Activated T-helper 1 cell treated with anti-CD3 and anti-CD28 coated beads, Interleukin-12 subunit alpha, Interleukin-12 subunit beta, Interleukin-2, Interleukin-4 antibody, amounts not matched to agents 30 ng/mL and 10 ng/mL and 1 ng/mL, durations not matched to agents 14 hours and 24 hours and 36 hours (primary cell): ENCODE measurements at regions of chr1 and their contacts with region 1.

Region 1: GRCh38 chr1:45303582-45304310 is 22.9 kb upstream of the HPDL start:
- DNase-seq: peak; percentile 87
- H3K4me3 Mint-ChIP-seq: peak overlapping the region; percentile 92
- H3K27ac Mint-ChIP-seq: peak overlapping the region; percentile 93
- H3K4me1 Mint-ChIP-seq: peaks cover 50% of the 10 kb centered on the region
- H3K27me3 Mint-ChIP-seq: no peaks in the 10 kb centered on the region

Region 2: GRCh38 chr1:44354840-44355581 is 948.7 kb before region 1 on chr1 and contains the start of gene ERI3:
- intact Hi-C with region 1: loop called (anchors 10 kb)
- DNase-seq: peak; percentile 95
- H3K4me3 Mint-ChIP-seq: peak within 1 kb of the TSS; percentile 93
- H3K27ac Mint-ChIP-seq: peak within 1 kb of the TSS; percentile 88
- H3K4me1 Mint-ChIP-seq: peaks cover 34% of the 10 kb centered on the region
- H3K27me3 Mint-ChIP-seq: no peaks in the 10 kb centered on the region
- total RNA-seq, gene ERI3: 51.4 and 55.4 TPM in 2 replicates

Region 3: DNA sequence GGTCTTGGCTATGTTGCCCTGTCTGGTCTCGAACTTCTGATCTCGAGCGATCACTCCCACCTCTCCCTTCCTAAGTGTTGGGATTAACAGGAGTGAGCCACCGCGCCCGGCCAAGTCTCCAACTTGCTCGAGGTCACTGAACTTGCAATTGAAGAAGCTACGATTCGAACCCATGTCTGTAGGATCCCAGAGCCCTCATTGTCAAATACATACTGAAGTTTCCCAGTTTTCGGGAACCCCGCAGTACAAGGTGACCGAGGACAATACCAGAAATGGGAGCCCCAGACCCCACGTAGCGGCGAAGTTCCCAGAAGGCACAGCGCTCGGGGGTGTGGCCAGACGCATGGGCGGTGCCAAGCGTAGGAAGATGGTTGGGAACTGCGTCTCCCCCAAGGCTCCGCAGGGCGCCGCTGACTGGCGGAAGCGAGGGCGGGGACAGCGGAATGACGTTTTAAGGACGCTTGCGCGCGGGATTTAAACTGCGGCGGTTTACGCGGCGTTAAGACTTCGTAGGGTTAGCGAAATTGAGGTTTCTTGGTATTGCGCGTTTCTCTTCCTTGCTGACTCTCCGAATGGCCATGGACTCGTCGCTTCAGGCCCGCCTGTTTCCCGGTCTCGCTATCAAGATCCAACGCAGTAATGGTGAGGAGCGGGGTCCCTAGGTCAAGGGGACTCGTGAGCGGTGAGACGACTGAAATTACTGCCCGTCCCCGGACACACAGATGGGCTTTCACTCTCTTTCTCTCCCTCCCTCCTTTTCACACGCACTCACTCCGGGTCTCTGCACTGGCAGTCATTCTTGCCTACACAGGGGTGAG is 564.2 kb before region 1 on chr1 and contains the start of gene KIF2C:
- intact Hi-C with region 1: loop called (anchors 1 kb)
- DNase-seq: peak; percentile 95
- H3K4me3 Mint-ChIP-seq: peak within 1 kb of the TSS; percentile 92
- H3K27ac Mint-ChIP-seq: peak within 1 kb of the TSS; percentile 90
- H3K4me1 Mint-ChIP-seq: peaks cover 37% of the 10 kb centered on the region
- H3K27me3 Mint-ChIP-seq: no peaks in the 10 kb centered on the region
- total RNA-seq, gene KIF2C: 68.7 and 72.9 TPM in 2 replicates

Region 4: GRCh38 chr1:44835738-44836675 is 467.7 kb before region 1 on chr1:
- intact Hi-C with region 1: loop called (anchors 2 kb)
- DNase-seq: peak; percentile 71
- H3K4me3 Mint-ChIP-seq: peak overlapping the region; percentile 26
- H3K27ac Mint-ChIP-seq: no peak overlapping the region
- H3K4me1 Mint-ChIP-seq: peaks cover 9% of the 10 kb centered on the region
- H3K27me3 Mint-ChIP-seq: peaks cover 4% of the 10 kb centered on the region

Region 5: DNA sequence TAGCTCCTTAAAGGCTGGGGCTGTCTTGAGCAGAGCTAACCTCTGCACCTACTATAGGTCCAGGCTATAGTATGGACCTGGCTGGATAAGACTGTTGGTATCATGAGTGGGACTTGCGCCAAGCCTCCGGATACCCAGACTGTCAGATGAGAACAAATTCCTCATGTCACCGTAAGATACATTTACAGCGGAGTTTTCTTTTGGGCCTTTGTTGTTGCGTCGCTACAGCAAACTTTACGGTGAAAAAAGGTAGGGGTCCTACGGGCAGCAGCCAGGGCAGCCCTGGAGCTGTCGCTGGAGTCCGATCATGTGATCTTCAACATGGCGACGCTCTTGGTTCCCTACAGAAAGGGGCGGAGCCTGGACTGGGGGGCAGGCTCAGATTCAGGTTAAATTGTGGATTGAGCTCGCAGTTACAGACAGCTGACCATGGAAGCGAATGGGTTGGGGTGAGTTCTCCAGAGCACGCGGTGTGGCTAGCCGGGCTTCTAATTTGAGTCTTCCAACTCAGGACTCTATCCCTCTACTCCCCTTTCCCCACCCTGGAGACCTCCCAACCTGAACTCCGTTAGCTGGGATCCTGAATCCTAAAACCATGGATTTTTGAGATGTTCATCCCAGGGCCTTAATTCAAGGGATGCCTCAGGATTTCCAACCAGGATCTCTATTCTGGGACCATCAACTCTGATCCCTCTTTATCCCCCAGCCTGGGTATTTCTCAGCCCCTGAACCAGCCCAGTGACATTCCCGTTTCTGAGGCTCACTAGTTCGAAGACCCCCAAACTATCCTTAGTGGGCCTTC is 291.7 kb before region 1 on chr1 and contains the start of gene UROD:
- intact Hi-C with region 1: loop called (anchors 1 kb)
- DNase-seq: peak; percentile 86
- H3K4me3 Mint-ChIP-seq: peak within 1 kb of the TSS; percentile 84
- H3K27ac Mint-ChIP-seq: peak within 1 kb of the TSS; percentile 90
- H3K4me1 Mint-ChIP-seq: peaks cover 58% of the 10 kb centered on the region
- H3K27me3 Mint-ChIP-seq: no peaks in the 10 kb centered on the region
- total RNA-seq, gene UROD: 79.9 and 81.9 TPM in 2 replicates

Region 6: DNA sequence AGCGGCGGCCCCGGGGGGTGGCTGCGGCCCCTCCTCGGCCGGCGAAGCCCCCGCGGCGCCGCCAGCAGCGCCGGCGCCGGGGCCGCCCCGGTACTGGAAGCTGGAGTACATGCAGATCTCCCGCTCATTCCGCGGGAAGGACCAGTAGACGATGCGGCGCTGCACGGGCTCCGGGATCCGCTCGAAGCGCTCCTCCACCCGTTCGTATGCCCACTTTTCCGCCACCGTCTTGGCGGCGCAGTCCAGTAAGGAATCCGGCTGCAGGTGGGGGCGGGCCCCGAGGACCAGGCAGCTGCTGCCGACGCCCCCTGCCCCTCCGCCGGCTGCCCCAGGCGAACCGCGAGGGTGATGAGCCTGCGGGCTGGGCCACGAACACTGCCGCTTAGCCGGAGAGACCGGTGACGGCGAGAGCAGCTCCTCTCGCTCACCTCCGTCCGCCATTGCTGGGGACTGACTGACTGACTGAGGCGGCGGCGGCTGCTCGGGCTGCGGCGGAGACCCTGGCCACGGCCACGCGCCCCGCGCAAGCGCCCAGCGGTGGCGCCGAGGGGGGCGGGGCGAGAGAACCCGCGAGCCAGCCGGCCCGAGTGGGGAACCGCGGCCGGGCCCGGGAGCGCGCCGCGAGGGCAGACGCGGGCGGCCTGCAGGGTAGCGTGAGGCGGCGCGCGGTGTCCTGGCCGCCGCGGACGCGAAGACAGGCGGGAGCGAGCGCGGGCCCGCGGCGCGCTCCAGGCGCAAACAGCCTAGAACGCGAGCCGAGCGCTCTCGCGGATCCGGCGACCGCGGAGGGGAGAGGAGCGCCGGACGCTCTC is 97.6 kb before region 1 on chr1 and contains the start of gene ZSWIM5:
- intact Hi-C with region 1: loop called (anchors 1 kb)
- DNase-seq: peak; percentile 43
- H3K4me3 Mint-ChIP-seq: peak within 1 kb of the TSS; percentile 88
- H3K27ac Mint-ChIP-seq: peak within 1 kb of the TSS; percentile 86
- H3K4me1 Mint-ChIP-seq: peaks cover 17% of the 10 kb centered on the region
- H3K27me3 Mint-ChIP-seq: peaks cover 43% of the 10 kb centered on the region
- total RNA-seq, gene ZSWIM5: 0.10 and 0.15 TPM in 2 replicates

Region 7: DNA sequence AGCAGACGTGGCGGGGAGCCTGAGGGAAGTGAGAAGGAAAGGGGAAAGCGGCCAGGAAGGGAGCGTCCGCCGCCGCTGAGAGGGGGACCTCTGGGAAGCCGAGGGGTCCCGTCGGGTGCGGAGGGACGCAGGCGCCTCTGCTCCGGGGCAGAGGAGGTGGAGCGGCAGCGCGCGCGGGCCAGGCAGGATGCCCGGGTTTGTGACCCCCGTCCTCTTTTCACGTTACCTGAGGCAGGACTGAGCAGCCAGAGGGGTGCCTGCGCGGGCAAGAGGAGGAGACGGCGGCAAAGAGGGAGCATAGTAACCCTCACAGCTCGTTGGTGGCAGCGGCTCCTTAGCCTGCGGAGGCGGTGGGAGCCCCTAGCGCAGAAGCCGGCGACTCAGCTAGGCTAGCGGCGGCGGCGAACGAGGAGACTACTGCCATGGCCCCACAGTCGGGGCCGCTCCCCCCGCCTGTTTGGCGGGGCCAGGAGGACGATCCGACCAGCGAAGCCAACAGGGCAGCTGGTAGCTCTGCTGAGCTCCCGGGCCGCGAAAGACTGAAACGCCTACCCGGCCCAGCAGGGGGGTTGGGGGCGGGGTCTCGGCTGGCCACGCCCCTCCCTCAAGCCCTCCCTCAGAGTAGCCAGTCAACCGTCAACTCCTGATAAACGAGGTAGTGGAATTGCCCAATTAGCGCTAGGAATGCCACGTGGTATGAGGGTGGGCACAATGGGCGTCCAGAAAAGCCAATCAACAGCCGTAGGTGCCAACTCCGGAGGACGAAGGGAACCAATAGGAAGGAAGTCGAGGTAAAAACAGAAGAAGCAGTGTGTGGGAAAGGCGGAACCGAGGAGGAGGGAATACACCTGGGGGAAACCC is 187.1 kb after region 1 on chr1 and contains the start of gene TESK2:
- intact Hi-C with region 1: loop called (anchors 1 kb)
- DNase-seq: peak; percentile 97
- H3K4me3 Mint-ChIP-seq: no peak within 1 kb of the TSS
- H3K27ac Mint-ChIP-seq: no peak within 1 kb of the TSS
- H3K4me1 Mint-ChIP-seq: peaks cover 5% of the 10 kb centered on the region
- H3K27me3 Mint-ChIP-seq: no peaks in the 10 kb centered on the region
- total RNA-seq, gene TESK2: 1.4 and 1.6 TPM in 2 replicates